Lower lobe of right lung (tissue), 2 donors: ENCODE measurements at regions of chr1 and their contacts with region 1.

Region 1: DNA sequence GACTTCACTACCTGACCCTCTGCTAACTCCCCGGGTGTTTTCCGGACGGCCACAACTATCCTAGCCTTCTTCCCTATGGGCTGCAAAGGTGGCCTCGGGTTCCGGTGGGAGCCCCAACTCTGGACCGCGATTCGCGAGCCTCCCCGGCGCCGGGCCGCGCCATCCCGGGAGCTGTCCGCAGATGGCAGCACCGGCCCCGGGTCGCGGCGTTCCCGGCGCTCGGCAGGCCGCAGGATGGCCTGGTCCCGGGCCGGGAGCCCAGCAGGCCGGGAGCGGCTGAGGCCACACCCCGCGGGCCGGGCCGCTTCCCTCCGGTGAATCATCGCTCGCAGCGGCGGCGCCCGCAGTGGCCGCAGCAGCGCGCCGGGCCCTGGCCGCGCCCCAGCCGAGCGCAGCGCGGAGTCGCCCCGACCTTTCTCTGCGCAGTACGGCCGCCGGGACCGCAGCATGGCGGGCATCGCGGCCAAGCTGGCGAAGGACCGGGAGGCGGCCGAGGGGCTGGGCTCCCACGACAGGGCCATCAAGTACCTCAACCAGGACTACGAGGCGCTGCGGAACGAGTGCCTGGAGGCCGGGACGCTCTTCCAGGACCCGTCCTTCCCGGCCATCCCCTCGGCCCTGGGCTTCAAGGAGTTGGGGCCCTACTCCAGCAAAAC is at the start of gene CAPN2:
- DNase-seq: peak; percentile 90
- ATAC-seq: peak; percentile 94
- H3K4me3 ChIP-seq: peak within 1 kb of the TSS; percentile 88
- H3K27ac ChIP-seq: peak within 1 kb of the TSS; percentile 100
- H3K4me1 ChIP-seq: peaks cover 71% of the 10 kb centered on the region
- H3K27me3 ChIP-seq: no peaks in the 10 kb centered on the region
- CTCF ChIP-seq: peak; percentile 74
- total RNA-seq, gene CAPN2: 253 TPM

Region 2: DNA sequence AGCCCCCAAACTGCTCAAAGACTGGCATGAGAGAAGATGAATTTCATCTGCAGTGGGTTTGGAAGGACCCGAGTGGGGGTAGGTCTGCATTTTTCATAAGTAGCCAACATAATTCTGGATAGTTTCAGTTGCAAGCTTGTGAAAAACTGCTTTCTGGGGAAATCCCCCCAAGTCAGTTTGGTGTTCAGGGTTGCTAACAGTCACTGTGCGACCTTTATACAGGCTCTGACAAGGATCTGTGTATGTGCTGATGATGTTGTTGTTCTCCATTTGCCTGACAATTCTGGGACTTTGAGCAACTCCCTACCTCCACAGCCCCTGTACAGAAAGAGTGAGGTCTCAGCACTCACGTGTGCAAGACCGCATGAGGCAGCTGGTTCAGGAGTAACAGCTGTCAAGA is 436.3 kb before region 1 on chr1:
- intact Hi-C with region 1: no loop called
- DNase-seq: no peak
- ATAC-seq: no peak
- H3K4me3 ChIP-seq: no peak overlapping the region
- H3K27ac ChIP-seq: no peak overlapping the region
- H3K4me1 ChIP-seq: no peaks in the 10 kb centered on the region
- H3K27me3 ChIP-seq: no peaks in the 10 kb centered on the region
- CTCF ChIP-seq: no peak

Region 3: DNA sequence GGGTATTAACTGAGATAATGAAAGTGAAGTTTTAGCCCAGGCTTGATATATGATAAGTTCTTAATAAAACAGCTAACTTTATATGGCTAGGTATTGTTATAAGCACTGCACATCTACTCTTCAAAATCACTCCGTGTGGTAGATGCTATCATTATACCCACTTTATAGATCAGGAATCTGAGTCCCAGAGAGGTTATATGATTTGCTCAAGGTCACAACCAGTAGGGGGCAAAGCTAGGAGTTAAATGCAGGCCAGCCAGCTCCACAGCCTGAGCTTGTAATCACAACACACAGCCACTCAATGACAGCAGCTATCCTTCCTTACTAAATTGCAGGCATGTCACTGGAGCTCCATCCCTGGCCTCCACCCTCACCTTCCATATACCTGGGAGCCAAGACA is 162.6 kb before region 1 on chr1:
- intact Hi-C with region 1: no loop called
- DNase-seq: no peak
- ATAC-seq: no peak
- H3K4me3 ChIP-seq: no peak overlapping the region
- H3K27ac ChIP-seq: no peak overlapping the region
- H3K4me1 ChIP-seq: peaks cover 3% of the 10 kb centered on the region
- H3K27me3 ChIP-seq: no peaks in the 10 kb centered on the region
- CTCF ChIP-seq: no peak

Region 4: DNA sequence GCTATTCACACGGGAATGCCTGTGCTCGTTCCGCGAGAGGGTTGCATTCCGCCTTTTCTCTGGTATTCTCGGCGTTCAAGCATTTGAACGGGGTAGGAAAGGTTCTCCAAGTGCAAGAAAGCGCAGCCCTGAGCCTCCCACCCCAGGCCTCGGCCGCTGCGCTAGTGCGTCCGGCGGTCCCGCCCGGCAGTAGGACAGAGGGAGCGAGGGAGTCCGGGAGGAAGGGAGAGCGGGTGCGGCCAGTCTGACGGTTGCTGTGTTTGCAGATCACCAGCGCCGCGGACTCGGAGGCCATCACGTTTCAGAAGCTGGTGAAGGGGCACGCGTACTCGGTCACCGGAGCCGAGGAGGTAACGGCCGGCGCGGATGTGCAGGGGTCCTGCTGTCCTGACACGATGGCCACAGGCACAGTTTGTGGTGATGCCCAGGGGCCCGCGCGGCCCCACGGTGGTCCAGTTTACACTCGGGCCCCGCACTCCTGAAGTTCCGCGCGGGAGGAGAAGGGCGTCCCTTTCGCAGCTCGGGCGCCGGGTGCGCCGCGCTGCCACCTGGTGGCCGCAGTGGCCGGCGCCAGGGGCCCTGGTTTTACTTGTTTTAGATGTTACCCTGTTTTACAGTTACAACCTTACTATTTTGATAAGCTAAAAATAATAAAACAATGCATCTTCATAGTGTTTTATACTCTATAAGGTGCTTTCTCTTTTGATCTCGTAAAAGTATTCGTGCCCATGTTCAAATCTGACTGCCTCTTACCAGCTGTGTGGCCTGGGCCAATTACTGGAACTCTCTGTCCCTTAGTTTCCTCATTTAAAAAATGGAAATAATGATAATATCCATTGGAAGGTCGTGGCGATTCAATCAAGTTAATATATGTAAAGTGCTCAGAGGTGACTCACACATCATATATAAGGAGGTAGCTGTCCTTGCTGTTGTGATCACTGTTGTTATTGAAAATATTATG is 36.7 kb after region 1 on chr1:
- intact Hi-C with region 1: loop called (anchors 5 kb)
- DNase-seq: peak; percentile 83
- ATAC-seq: peak; percentile 88 to 91
- H3K4me3 ChIP-seq: peak overlapping the region; percentile 56
- H3K27ac ChIP-seq: peak overlapping the region; percentile 76
- H3K4me1 ChIP-seq: peaks cover 23% of the 10 kb centered on the region
- H3K27me3 ChIP-seq: no peaks in the 10 kb centered on the region
- CTCF ChIP-seq: peak; percentile 96